Right ventricle myocardium superior (tissue), 1 donor: ENCODE measurements at regions of chr20 and their contacts with region 1.

Region 1: GRCh38 chr20:49484180-49485140 is 2.0 kb upstream of the KCNB1 start:
- DNase-seq: peak; percentile 90
- ATAC-seq: peak; percentile 96

Region 2: GRCh38 chr20:49326026-49326425 is 158.4 kb before region 1 on chr20:
- intact Hi-C with region 1: no loop called
- DNase-seq: no peak
- ATAC-seq: no peak

Region 3: DNA sequence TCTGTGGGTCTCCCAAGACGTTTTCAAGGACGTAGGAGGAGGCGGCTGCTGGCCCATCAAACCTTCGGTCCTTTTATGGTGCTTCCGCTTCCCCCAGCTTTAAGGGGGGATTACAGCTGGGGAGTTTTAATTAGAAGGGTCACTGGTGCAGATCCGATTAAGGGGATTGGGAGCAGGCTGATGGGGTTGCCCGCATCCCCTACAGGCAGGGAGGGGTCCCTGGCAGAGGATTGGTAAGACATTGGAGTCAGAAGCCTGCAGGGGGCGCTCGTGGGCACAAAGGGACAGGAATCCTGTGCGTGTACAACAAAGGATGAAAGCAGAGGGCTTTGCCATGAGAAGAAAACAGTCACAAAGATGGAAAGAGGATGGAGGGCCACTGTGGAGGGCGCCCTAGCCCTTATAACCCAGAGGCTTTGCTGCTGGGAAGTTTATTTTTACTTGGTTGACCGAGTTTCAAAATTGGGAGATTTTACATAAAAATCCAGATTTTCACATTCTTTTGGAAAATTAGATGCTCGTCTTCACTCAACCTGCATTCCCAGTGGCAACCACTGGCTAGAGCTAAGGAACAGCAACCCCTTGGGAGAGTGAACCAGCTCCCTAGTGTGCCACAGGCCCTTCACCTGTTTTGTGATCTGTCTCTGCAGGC is 99.9 kb before region 1 on chr20:
- intact Hi-C with region 1: loop called (anchors 10 kb)
- DNase-seq: peak; percentile 85
- ATAC-seq: peak; percentile 46

Region 4: DNA sequence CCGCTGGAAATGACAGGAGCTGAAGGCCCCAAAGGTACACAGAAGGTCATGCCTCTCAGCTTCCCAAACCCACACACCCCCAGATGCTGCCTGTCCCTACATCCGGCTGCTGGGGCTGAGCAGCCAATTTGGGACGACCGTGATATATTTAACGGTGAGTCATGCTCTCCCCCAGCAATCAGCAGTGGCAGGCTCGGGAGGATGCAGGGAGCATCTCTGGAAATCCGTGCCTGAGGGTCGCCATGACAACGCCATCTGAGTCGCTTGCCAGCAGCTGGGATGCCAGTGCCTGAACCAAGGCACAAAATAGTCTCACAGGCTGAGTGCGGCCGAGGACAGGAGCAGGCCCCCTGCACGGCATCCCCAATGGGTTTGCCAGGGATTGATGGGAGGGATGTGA is 59.9 kb before region 1 on chr20:
- intact Hi-C with region 1: no loop called
- DNase-seq: no peak
- ATAC-seq: no peak

Region 5: DNA sequence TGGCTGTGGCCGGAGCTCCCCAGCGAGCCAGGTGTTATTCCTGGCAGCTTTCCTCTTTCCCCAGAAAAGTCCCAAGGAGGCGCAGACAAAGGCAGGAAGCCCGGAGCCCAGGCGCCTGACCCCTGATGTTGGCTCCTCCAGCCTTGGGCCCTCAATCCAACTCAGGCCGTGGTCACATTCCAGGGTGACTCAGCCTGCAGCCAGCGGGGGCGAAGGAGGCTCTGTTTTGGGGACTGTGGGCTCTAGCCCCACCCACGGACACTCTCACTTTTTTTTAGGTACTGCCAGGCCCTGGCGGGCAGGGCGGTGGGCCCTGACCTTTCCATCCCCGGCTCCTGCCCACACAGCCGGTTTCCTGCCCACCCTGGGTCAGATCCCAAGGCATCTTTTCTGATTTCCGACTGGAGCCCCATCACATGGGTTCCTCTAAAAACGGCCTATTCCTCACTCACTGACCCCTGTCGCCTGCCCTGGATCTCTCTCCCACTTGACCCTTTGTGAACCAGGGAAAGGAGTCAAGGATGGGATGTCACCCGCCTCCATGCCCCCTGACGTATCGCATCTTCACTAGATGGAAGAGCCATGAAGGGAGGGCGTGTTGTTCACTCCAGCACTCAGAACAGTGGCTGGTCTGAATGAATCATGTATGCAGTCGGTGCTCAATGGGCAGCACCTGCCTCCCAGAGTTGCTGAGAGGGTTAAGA is 78.0 kb after region 1 on chr20:
- intact Hi-C with region 1: no loop called
- DNase-seq: peak; percentile 86
- ATAC-seq: peak; percentile 83